ENCODE measurements at regions of chr5 and their contacts with region 1.

Region 1: DNA sequence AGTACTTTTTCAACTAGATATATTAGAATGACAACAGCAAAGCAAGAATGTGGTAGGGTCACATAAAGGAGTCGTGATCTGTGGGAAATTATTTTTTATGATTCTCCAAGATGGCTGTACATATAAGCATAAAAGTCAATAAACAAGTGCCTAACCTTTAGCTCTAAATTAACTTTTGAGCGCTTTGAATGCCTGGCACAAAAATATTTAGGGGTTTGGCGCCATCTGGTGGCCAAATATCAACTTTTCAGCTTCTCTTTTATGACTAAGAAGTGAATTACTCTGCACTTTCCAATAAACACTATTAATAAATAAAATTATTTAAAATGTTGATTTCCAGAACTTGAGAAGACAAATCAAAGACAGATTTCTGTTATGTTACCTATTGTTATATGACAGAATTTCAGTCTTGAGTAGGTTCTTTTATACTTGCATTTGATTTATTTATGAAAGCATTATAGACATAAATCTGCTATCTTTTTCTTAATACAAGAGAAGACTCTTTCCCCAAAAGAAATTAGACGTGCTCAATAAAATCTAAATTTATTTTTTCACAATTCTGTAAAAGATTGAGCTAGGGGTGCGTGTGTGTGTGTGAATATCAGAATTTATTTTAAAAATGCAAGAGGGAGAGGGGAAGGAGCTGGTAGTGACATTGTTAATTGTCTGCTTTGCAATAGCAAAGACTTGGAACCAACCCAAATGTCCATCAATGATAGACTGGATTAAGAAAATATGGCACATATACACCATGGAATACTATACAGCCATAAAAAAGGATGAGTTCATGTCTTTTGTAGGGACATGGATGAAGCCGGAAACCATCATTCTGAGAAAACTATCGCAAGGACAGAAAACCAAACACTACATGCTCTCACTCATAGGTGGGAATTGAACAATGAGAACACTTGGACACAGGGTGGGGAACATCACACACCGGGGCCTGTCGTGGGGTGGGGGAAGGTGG is 36.7 kb upstream of the ARRDC3 start:
- DNase-seq: peak; percentile 67 to 86
- ATAC-seq: peak; percentile 64 to 82 (median 68)
- H3K4me3 ChIP-seq: no peak overlapping the region
- H3K4me3 Mint-ChIP-seq: peak overlapping the region; percentile 47
- H3K27ac ChIP-seq: no peak overlapping the region
- H3K27ac Mint-ChIP-seq: no peak overlapping the region
- H3K4me1 ChIP-seq: no peaks in the 10 kb centered on the region
- H3K4me1 Mint-ChIP-seq: peaks cover 26 to 29% of the 10 kb centered on the region in 2 donors
- H3K27me3 ChIP-seq: no peaks in the 10 kb centered on the region
- H3K27me3 Mint-ChIP-seq: no peaks in the 10 kb centered on the region
- CTCF ChIP-seq: peak; percentile 88

Region 2: GRCh38 chr5:90866333-90866732 is 553.5 kb before region 1 on chr5:
- intact Hi-C with region 1: loop called (anchors 2 kb)
- DNase-seq: peak in 1 of 2 donors; percentile 52
- ATAC-seq: peak in 1 of 3 donors; percentile 68
- H3K4me3 ChIP-seq: no peak overlapping the region
- H3K4me3 Mint-ChIP-seq: no peak overlapping the region
- H3K27ac ChIP-seq: no peak overlapping the region
- H3K27ac Mint-ChIP-seq: no peak overlapping the region
- H3K4me1 ChIP-seq: no peaks in the 10 kb centered on the region
- H3K4me1 Mint-ChIP-seq: no peaks in the 10 kb centered on the region
- H3K27me3 ChIP-seq: no peaks in the 10 kb centered on the region
- H3K27me3 Mint-ChIP-seq: peaks cover 9 to 37% of the 10 kb centered on the region in 2 donors
- CTCF ChIP-seq: peak; percentile 60

Region 3: GRCh38 chr5:90932052-90932699 is 487.7 kb before region 1 on chr5:
- intact Hi-C with region 1: loop called (anchors 1 kb)
- DNase-seq: peak in 1 of 2 donors; percentile 67
- ATAC-seq: peak in 2 of 3 donors; percentile 61 to 74
- H3K4me3 ChIP-seq: no peak overlapping the region
- H3K4me3 Mint-ChIP-seq: no peak overlapping the region
- H3K27ac ChIP-seq: no peak overlapping the region
- H3K27ac Mint-ChIP-seq: no peak overlapping the region
- H3K4me1 ChIP-seq: no peaks in the 10 kb centered on the region
- H3K4me1 Mint-ChIP-seq: peaks cover 5 to 6% of the 10 kb centered on the region in 2 donors
- H3K27me3 ChIP-seq: no peaks in the 10 kb centered on the region
- H3K27me3 Mint-ChIP-seq: peaks cover 12% of the 10 kb centered on the region in 2 donors
- CTCF ChIP-seq: peak; percentile 77

Region 4: GRCh38 chr5:91101600-91102379 is 318.1 kb before region 1 on chr5:
- intact Hi-C with region 1: loop called (anchors 1 kb)
- DNase-seq: peak; percentile 49 to 72
- ATAC-seq: peak; percentile 95 to 100 (median 99)
- H3K4me3 ChIP-seq: no peak overlapping the region
- H3K4me3 Mint-ChIP-seq: no peak overlapping the region
- H3K27ac ChIP-seq: no peak overlapping the region
- H3K27ac Mint-ChIP-seq: no peak overlapping the region
- H3K4me1 ChIP-seq: no peaks in the 10 kb centered on the region
- H3K4me1 Mint-ChIP-seq: peaks cover 8 to 9% of the 10 kb centered on the region in 2 donors
- H3K27me3 ChIP-seq: no peaks in the 10 kb centered on the region
- H3K27me3 Mint-ChIP-seq: peaks cover 8 to 12% of the 10 kb centered on the region in 2 donors
- CTCF ChIP-seq: peak; percentile 63

Region 5: DNA sequence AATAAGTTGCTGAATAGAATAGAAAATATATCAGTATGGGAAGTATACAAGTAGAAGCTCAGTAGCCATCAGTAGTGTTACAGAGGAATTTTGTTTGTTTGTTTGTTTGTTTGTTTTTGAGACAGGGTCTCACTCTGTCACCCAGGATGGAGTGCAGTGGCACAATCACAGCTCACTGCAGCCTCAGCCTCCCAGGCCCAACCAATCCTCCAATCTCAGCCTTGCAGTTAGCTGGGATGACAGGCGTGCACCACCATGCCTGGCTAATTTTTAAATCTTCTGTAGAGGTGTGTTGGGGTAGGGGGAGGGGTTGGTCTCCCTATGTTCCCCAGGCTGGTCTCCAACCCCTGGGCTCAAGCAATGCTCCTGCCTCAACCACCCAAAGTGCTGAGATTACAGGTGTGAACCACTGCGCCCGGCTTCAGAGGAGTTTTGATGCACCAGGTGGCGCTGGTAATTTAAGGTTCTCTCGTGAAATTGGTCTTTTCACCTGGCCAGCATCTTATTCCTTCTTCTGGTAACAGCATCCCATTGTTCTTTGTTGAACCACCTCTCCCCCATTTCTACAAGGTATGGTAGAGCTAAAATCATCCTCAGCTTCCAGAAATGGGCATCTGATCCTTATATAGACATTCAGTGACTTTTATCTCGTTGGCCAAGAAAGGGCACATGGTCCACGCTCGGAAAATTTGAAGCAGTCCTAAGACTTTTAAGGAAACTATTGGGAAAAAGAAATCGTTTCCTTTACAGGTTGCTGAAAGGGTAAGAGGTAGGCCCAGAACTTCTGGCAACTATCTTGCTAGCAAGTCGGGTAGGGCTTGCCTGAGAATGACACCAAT is 193.8 kb before region 1 on chr5:
- intact Hi-C with region 1: loop called (anchors 1 kb)
- DNase-seq: peak; percentile 26 to 76
- ATAC-seq: peak in 2 of 3 donors; percentile 45 to 50
- H3K4me3 ChIP-seq: no peak overlapping the region
- H3K4me3 Mint-ChIP-seq: no peak overlapping the region
- H3K27ac ChIP-seq: no peak overlapping the region
- H3K27ac Mint-ChIP-seq: no peak overlapping the region
- H3K4me1 ChIP-seq: no peaks in the 10 kb centered on the region
- H3K4me1 Mint-ChIP-seq: no peaks in the 10 kb centered on the region
- H3K27me3 ChIP-seq: no peaks in the 10 kb centered on the region
- H3K27me3 Mint-ChIP-seq: peaks cover 9 to 13% of the 10 kb centered on the region in 2 donors
- CTCF ChIP-seq: peak; percentile 42

Region 6: DNA sequence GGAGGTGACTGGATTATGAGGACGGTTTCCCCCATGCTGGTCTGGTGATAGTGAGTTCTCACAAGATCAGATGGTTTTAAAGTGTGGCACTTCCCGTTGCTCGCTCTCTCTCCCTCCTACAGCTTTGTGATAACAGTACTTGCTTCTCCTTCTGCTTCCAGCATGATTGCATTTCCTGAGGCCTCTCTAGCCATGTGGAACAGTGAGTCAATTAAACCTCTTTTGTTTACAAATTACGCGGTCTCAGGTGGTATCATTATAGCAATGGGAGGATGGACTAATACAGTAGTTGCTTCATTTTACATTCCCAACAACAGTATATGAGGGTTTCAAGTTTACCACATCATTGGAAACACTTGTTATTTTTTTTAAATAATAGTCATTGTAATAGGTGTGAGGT is 900.6 kb after region 1 on chr5:
- intact Hi-C with region 1: no loop called
- DNase-seq: no peak
- ATAC-seq: no peak
- H3K4me3 ChIP-seq: no peak overlapping the region
- H3K4me3 Mint-ChIP-seq: no peak overlapping the region
- H3K27ac ChIP-seq: no peak overlapping the region
- H3K27ac Mint-ChIP-seq: no peak overlapping the region
- H3K4me1 ChIP-seq: no peaks in the 10 kb centered on the region
- H3K4me1 Mint-ChIP-seq: no peaks in the 10 kb centered on the region
- H3K27me3 ChIP-seq: no peaks in the 10 kb centered on the region
- H3K27me3 Mint-ChIP-seq: no peaks in the 10 kb centered on the region
- CTCF ChIP-seq: no peak

Measured in natural killer cell (primary cell).